ENCODE measurements at regions of chr6 and their contacts with region 1.

Region 1: GRCh38 chr6:34791701-34792235 is at the start of gene BLTP3A:
- DNase-seq: peak; percentile 88
- ATAC-seq: peak; percentile 95
- H3K4me3 Mint-ChIP-seq: peak within 1 kb of the TSS; percentile 99
- H3K27ac Mint-ChIP-seq: peak within 1 kb of the TSS; percentile 95
- H3K4me1 Mint-ChIP-seq: peaks cover 21% of the 10 kb centered on the region
- H3K27me3 Mint-ChIP-seq: no peaks in the 10 kb centered on the region
- total RNA-seq, gene BLTP3A: 17.0 to 21.0 TPM

Region 2: DNA sequence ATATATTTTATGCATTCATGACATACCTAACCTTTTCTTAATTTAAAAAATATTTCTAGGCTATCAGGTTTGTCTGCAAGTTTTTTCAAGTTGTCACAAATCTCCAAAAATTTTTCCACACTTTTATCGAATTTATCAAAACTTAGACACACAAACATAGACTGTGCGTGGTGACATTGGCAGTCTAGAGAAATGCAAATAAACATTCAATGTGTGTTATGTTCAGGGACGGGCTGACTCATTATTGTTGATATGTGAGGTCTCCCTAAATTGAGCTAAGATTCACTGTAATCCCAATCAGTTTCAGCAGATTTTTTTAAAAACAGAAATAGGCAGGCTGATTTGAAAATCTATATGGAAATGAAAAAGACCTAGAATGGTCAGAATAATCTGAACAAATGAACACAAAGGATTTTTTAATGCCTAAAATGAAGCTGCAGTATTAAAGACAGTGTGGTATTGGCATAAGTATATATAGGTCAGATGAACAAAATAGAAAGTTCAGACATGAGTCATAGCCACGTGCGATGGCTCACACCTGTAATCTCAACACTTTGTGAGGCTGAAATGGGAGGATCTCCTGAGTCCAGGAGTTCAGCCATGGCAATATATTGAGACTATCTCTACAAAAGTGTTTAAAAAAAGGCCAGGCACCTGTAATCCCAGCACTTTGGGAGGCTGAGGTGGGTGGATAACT is 19.3 kb after region 1 on chr6:
- CTCF ChIA-PET with region 1: interaction called, 3 read pairs
- POLR2A ChIA-PET with region 1: no interaction called
- intact Hi-C with region 1: loop called in 1 of 2 experiments (anchors 2 kb)
- DNase-seq: peak; percentile 60
- ATAC-seq: peak; percentile 99
- H3K4me3 Mint-ChIP-seq: no peak overlapping the region
- H3K27ac Mint-ChIP-seq: no peak overlapping the region
- H3K4me1 Mint-ChIP-seq: peaks cover 15% of the 10 kb centered on the region
- H3K27me3 Mint-ChIP-seq: no peaks in the 10 kb centered on the region

Region 3: GRCh38 chr6:35024551-35025054 is 232.8 kb after region 1 on chr6:
- CTCF ChIA-PET with region 1: no interaction called
- POLR2A ChIA-PET with region 1: no interaction called
- intact Hi-C with region 1: no loop called
- DNase-seq: no peak
- ATAC-seq: no peak
- H3K4me3 Mint-ChIP-seq: no peak overlapping the region
- H3K27ac Mint-ChIP-seq: no peak overlapping the region
- H3K4me1 Mint-ChIP-seq: no peaks in the 10 kb centered on the region
- H3K27me3 Mint-ChIP-seq: no peaks in the 10 kb centered on the region

Measured in activated CD4-positive, alpha-beta T cell treated with anti-CD3 and anti-CD28 coated beads for 36 hours (primary cell).